Activated CD8-positive, alpha-beta T cell treated with anti-CD3 and anti-CD28 coated beads, Interleukin-2, amount 10 ng/mL, durations not matched to agents 7 days and 5 days (primary cell): ENCODE measurements at regions of chr12 and their contacts with region 1.

Region 1: DNA sequence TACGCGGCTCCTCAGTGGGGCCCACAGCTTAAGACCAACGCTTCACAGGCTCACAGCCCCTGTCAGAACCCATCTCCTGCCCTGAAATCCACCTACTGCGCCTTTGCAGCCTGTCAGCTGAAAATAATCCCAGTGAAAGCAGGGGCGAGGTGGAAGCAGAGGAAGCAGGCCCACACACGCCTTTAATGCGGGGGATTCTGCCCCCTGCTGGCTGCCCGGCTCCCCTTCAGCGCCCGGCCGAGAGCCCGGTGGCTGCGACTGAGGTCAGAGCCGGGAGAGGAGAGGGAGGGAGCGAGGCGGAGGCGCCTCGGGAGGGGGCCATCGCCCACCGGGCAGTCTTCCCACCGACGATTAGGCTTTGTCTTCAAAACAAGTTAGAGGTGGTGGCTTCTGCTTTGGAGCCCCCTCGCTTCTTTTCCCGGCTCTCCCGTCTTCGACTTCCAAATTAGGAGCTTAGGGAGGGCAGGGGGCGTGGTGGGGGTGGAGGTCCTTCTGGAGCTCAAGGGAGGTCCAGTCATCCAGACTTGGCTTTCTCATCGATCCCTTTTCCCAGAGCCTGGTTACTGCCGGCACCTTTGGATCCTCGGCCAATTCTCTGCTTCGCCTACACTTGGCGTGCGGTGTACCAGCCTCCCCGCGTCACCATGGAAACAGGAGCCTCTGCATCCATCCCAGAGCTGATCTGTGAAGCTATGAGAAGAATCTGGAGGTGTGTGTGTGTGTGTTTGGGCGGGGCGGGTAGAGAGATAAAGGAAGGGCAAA is 25.2 kb upstream of the RND1 start:
- DNase-seq: peak; percentile 81
- ATAC-seq: peak; percentile 98
- H3K4me3 Mint-ChIP-seq: no peak overlapping the region
- H3K27ac Mint-ChIP-seq: no peak overlapping the region
- H3K4me1 Mint-ChIP-seq: peaks cover 8% of the 10 kb centered on the region
- H3K27me3 Mint-ChIP-seq: peaks cover 15% of the 10 kb centered on the region

Region 2: DNA sequence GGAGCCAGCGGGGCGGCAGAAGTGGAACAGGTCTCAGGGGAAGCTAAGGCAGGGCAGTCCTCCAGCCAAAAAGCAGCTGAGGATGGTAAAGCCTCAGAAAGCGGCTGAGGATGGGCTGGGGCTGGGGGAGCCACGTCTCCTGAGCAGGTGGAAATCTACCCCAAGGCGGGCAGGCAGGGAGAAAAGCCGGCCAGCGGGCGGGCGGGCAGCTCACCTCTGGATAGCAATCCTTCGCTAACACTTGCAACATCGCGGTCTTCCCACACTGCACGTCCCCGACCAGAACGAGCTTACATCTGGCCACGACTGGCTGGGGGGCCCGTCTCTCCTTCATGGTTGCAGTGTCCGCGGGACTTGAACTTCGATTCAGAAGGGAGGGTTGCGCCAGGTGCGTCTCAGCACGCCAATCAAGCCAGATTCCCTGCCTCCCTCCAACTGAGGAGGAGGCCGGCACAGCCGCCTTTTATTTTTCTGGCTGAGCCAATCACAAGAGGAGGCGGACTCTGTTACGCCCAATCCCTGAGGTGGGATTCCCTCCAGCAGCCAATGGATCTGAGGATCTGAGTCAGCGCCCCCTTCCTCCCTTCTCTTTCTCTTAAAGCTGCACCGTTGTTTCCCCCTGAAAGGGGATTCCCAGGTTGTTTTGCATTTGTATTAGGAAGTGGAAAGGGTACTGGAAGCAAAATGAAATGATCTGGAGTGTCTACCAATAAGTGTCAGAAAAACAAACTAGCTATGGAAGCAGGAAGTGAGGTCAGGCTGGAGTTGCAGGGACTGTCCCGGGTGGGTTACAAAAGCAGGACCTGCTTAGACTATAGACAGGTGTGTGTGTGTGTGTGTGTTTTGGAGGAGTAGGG is 25.2 kb before region 1 on chr12 and contains the start of gene RND1:
- CTCF ChIA-PET with region 1: interaction called, 55 read pairs
- POLR2A ChIA-PET with region 1: interaction called, 4 read pairs
- DNase-seq: peak; percentile 88
- ATAC-seq: peak; percentile 98
- H3K4me3 Mint-ChIP-seq: peak within 1 kb of the TSS; percentile 81
- H3K27ac Mint-ChIP-seq: peak within 1 kb of the TSS; percentile 71
- H3K4me1 Mint-ChIP-seq: peaks cover 23% of the 10 kb centered on the region
- H3K27me3 Mint-ChIP-seq: peaks cover 25% of the 10 kb centered on the region
- total RNA-seq, gene RND1: 1.4 to 2.5 TPM

Region 3: DNA sequence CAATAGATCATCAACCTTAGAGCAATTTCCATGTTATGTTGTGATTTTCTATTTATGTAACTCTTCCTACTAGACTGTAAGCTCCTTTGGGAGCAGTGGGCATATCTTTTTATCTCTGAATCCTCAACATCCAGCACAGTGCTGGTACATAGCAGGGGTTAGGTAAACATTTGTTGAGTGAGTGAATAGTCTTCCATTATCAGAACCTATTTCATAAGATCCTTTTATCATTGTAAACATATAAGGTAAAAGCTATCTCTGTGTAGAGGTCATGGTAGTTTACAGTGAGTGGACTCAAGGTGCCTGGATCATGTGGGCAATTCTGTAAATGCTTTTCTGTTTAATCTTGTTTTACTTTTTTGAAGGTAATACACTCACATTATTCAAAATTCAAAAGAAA is 19.4 kb after region 1 on chr12:
- CTCF ChIA-PET with region 1: interaction called, 77 read pairs
- POLR2A ChIA-PET with region 1: no interaction called
- DNase-seq: no peak
- ATAC-seq: no peak
- H3K4me3 Mint-ChIP-seq: no peak overlapping the region
- H3K27ac Mint-ChIP-seq: no peak overlapping the region
- H3K4me1 Mint-ChIP-seq: no peaks in the 10 kb centered on the region
- H3K27me3 Mint-ChIP-seq: peaks cover 9% of the 10 kb centered on the region

Region 4: GRCh38 chr12:48924617-48925303 is 33.9 kb after region 1 on chr12:
- CTCF ChIA-PET with region 1: interaction called, 15 read pairs
- POLR2A ChIA-PET with region 1: no interaction called
- DNase-seq: peak; percentile 85
- ATAC-seq: peak; percentile 87
- H3K4me3 Mint-ChIP-seq: peak overlapping the region; percentile 93
- H3K27ac Mint-ChIP-seq: peak overlapping the region; percentile 95
- H3K4me1 Mint-ChIP-seq: peaks cover 21% of the 10 kb centered on the region
- H3K27me3 Mint-ChIP-seq: no peaks in the 10 kb centered on the region

Region 5: GRCh38 chr12:48936379-48936979 is 45.6 kb after region 1 on chr12:
- CTCF ChIA-PET with region 1: interaction called, 11 read pairs
- POLR2A ChIA-PET with region 1: no interaction called
- DNase-seq: peak; percentile 88
- ATAC-seq: peak; percentile 60
- H3K4me3 Mint-ChIP-seq: no peak overlapping the region
- H3K27ac Mint-ChIP-seq: no peak overlapping the region
- H3K4me1 Mint-ChIP-seq: peaks cover 26% of the 10 kb centered on the region
- H3K27me3 Mint-ChIP-seq: no peaks in the 10 kb centered on the region